B cell (primary cell): ENCODE measurements at regions of chr3 and their contacts with region 1.

Region 1: GRCh38 chr3:187016639-187017345 is 86.5 kb downstream of the ST6GAL1 start:
- DNase-seq: peak; percentile 83
- ATAC-seq: peak; percentile 58
- H3K4me3 ChIP-seq: peak overlapping the region in 2 of 5 experiments; percentile 4 to 28
- H3K4me3 Mint-ChIP-seq: peak overlapping the region; percentile 75
- H3K27ac ChIP-seq: peak overlapping the region; percentile 92 to 96
- H3K27ac Mint-ChIP-seq: peak overlapping the region; percentile 90
- H3K4me1 ChIP-seq: peaks cover 97% of the 10 kb centered on the region in 2 donors
- H3K4me1 Mint-ChIP-seq: peaks cover 92% of the 10 kb centered on the region
- H3K27me3 ChIP-seq: no peaks in the 10 kb centered on the region
- H3K27me3 Mint-ChIP-seq: no peaks in the 10 kb centered on the region
- CTCF ChIP-seq: no peak

Region 2: DNA sequence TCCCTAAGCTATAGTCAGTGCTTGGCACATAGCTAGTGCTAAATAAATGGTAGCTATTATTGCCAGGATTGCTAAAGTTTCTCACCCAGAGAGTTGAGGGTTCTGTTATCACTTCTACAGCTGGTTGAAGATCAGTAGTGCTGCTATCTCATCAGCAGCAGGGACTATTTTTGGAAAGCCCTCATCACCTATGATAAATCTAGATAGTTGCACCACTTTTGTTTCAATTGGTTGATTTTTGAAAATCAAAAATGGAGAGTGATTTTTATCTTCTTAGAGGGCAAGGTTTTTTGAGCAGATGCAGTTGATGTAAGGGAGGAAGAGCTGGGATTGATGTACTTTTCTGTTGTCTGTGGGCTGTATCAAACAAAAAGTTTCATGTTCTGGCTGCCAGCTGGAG is 15.1 kb after region 1 on chr3:
- CTCF ChIA-PET with region 1: interaction called, 8 read pairs
- POLR2A ChIA-PET with region 1: interaction called, 8 read pairs
- intact Hi-C with region 1: loop called (anchors 1 kb)
- DNase-seq: no peak
- ATAC-seq: no peak
- H3K4me3 ChIP-seq: peak overlapping the region in 2 of 5 experiments; percentile 5 to 20
- H3K4me3 Mint-ChIP-seq: peak overlapping the region; percentile 80
- H3K27ac ChIP-seq: peak overlapping the region; percentile 72 to 84
- H3K27ac Mint-ChIP-seq: peak overlapping the region; percentile 84
- H3K4me1 ChIP-seq: peaks cover 61 to 66% of the 10 kb centered on the region in 2 donors
- H3K4me1 Mint-ChIP-seq: peaks cover 86% of the 10 kb centered on the region
- H3K27me3 ChIP-seq: no peaks in the 10 kb centered on the region
- H3K27me3 Mint-ChIP-seq: no peaks in the 10 kb centered on the region
- CTCF ChIP-seq: no peak

Region 3: DNA sequence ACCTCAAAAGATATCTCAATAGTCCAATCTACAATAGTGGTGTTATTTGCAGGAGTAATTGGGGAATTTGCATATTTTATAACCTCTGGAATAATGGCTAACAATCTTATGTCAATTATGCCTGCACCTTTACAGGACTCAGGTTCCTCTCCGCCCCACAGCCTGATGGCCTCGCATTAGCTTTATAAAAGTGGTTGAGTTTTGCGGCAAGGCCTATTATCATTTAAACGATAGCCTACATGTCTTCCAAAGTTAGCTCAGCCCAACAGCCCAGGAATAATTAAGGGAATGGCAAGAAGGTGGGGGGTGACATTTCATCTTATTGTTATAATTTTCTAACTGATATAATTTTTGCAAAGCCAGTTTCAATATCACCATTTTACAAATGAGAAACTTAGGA is 448.7 kb after region 1 on chr3:
- CTCF ChIA-PET with region 1: no interaction called
- POLR2A ChIA-PET with region 1: no interaction called
- intact Hi-C with region 1: no loop called
- DNase-seq: no peak
- ATAC-seq: no peak
- H3K4me3 ChIP-seq: no peak overlapping the region
- H3K4me3 Mint-ChIP-seq: no peak overlapping the region
- H3K27ac ChIP-seq: no peak overlapping the region
- H3K27ac Mint-ChIP-seq: no peak overlapping the region
- H3K4me1 ChIP-seq: no peaks in the 10 kb centered on the region
- H3K4me1 Mint-ChIP-seq: no peaks in the 10 kb centered on the region
- H3K27me3 ChIP-seq: peaks cover 0 to 6% (median 0%) of the 10 kb centered on the region in 4 experiments
- H3K27me3 Mint-ChIP-seq: peaks cover 40% of the 10 kb centered on the region
- CTCF ChIP-seq: no peak